Naive thymus-derived CD4-positive, alpha-beta T cell (primary cell): ENCODE measurements at regions of chr14 and their contacts with region 1.

Region 1: GRCh38 chr14:101843665-101844064 is 82.2 kb downstream of the PPP2R5C start:
- DNase-seq: peak in 7 of 9 donors; percentile 54 to 70 (median 59)
- ATAC-seq: peak; percentile 88
- H3K4me3 ChIP-seq: no peak overlapping the region
- H3K4me3 Mint-ChIP-seq: peak overlapping the region in 9 of 10 donors; percentile 5 to 66 (median 56)
- H3K27ac ChIP-seq: peak overlapping the region; percentile 30
- H3K27ac Mint-ChIP-seq: peak overlapping the region; percentile 70 to 90 (median 84)
- H3K4me1 ChIP-seq: peaks cover 56 to 57% of the 10 kb centered on the region in 2 donors
- H3K4me1 Mint-ChIP-seq: peaks cover 67 to 99% (median 90%) of the 10 kb centered on the region in 7 donors
- H3K27me3 ChIP-seq: no peaks in the 10 kb centered on the region
- H3K27me3 Mint-ChIP-seq: no peaks in the 10 kb centered on the region

Region 2: DNA sequence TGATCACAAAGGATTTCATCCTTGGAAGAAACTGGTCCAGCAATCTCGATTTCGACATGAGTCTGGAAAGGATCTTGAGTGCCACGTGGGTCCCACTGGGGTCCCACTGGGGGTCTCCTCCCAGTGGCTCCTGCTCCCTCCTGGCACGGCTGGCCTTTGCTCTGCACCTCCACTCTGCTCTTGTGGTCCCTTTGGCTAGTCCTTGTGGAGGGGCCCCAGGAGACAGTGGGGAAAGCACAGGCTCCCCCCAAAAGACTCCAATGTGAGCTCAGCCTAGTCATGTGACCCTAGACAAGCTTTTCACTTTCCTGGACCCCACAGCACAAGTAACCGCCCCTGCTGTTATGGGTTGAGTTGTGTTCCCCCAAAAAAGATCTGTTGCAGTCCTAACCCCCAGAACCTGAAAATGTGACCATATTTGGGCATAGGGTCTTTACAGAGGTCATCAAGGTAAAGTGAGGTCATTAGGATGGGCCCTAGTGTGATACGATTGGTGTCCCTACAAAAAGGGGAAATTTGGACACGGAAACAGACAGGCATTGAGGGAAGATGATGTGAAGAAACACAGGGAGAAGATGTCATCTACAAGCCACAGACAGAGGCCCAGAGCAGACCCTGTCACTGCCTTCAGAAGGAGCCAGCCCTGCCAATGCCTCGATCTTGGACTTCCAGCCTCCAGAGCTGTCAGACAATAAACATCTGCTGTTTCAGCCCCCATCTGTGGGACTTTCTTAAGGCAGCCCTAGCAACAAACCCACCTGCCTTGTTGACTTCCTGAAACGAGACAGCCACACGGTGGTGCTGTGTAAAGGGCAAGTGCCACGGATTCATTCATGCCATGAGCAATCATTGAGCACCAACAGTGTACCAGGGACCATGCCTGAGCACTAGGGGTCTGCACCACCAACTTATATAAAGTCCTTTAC is 106.0 kb before region 1 on chr14:
- CTCF ChIA-PET with region 1: no interaction called
- POLR2A ChIA-PET with region 1: no interaction called
- intact Hi-C with region 1: loop called in 1 of 2 experiments (anchors 1 kb)
- DNase-seq: peak in 4 of 9 donors; percentile 21 to 27 (median 24)
- ATAC-seq: peak; percentile 65
- H3K4me3 ChIP-seq: no peak overlapping the region
- H3K4me3 Mint-ChIP-seq: no peak overlapping the region
- H3K27ac ChIP-seq: no peak overlapping the region
- H3K27ac Mint-ChIP-seq: peak overlapping the region in 6 of 9 donors; percentile 20 to 76 (median 62)
- H3K4me1 ChIP-seq: peaks cover 1 to 14% of the 10 kb centered on the region in 2 donors
- H3K4me1 Mint-ChIP-seq: peaks cover 0 to 24% (median 12%) of the 10 kb centered on the region in 7 donors
- H3K27me3 ChIP-seq: no peaks in the 10 kb centered on the region
- H3K27me3 Mint-ChIP-seq: no peaks in the 10 kb centered on the region

Region 3: GRCh38 chr14:101767618-101768362 is 75.9 kb before region 1 on chr14:
- CTCF ChIA-PET with region 1: interaction called, 42 read pairs
- POLR2A ChIA-PET with region 1: interaction called, 6 read pairs
- intact Hi-C with region 1: loop called (anchors 1 kb)
- DNase-seq: no peak
- ATAC-seq: no peak
- H3K4me3 ChIP-seq: no peak overlapping the region
- H3K4me3 Mint-ChIP-seq: no peak overlapping the region
- H3K27ac ChIP-seq: no peak overlapping the region
- H3K27ac Mint-ChIP-seq: peak overlapping the region in 3 of 9 donors; percentile 2 to 43 (median 6)
- H3K4me1 ChIP-seq: peaks cover 9 to 11% of the 10 kb centered on the region in 2 donors
- H3K4me1 Mint-ChIP-seq: peaks cover 28 to 52% (median 38%) of the 10 kb centered on the region in 7 donors
- H3K27me3 ChIP-seq: no peaks in the 10 kb centered on the region
- H3K27me3 Mint-ChIP-seq: no peaks in the 10 kb centered on the region

Region 4: GRCh38 chr14:101774006-101774795 is 69.5 kb before region 1 on chr14:
- CTCF ChIA-PET with region 1: interaction called, 42 read pairs
- POLR2A ChIA-PET with region 1: interaction called, 5 read pairs
- intact Hi-C with region 1: loop called (anchors 1 kb)
- DNase-seq: no peak
- ATAC-seq: no peak
- H3K4me3 ChIP-seq: no peak overlapping the region
- H3K4me3 Mint-ChIP-seq: no peak overlapping the region
- H3K27ac ChIP-seq: no peak overlapping the region
- H3K27ac Mint-ChIP-seq: peak overlapping the region in 6 of 9 donors; percentile 14 to 70 (median 28)
- H3K4me1 ChIP-seq: no peaks in the 10 kb centered on the region
- H3K4me1 Mint-ChIP-seq: peaks cover 18 to 41% (median 35%) of the 10 kb centered on the region in 7 donors
- H3K27me3 ChIP-seq: no peaks in the 10 kb centered on the region
- H3K27me3 Mint-ChIP-seq: peaks cover 0 to 8% (median 0%) of the 10 kb centered on the region in 5 donors

Region 5: GRCh38 chr14:101809671-101810514 is 33.8 kb before region 1 on chr14:
- CTCF ChIA-PET with region 1: interaction called, 3 read pairs
- POLR2A ChIA-PET with region 1: interaction called, 11 read pairs
- intact Hi-C with region 1: loop called (anchors 1 to 2 kb)
- DNase-seq: peak; percentile 57 to 97 (median 95)
- ATAC-seq: peak; percentile 94
- H3K4me3 ChIP-seq: peak overlapping the region; percentile 92
- H3K4me3 Mint-ChIP-seq: peak overlapping the region; percentile 94 to 98 (median 96)
- H3K27ac ChIP-seq: peak overlapping the region; percentile 99
- H3K27ac Mint-ChIP-seq: peak overlapping the region; percentile 90 to 100 (median 99)
- H3K4me1 ChIP-seq: peaks cover 36 to 38% of the 10 kb centered on the region in 2 donors
- H3K4me1 Mint-ChIP-seq: peaks cover 27 to 62% (median 55%) of the 10 kb centered on the region in 7 donors
- H3K27me3 ChIP-seq: no peaks in the 10 kb centered on the region
- H3K27me3 Mint-ChIP-seq: no peaks in the 10 kb centered on the region

Region 6: GRCh38 chr14:101854366-101854765 is 10.7 kb after region 1 on chr14:
- CTCF ChIA-PET with region 1: interaction called, 10 read pairs
- POLR2A ChIA-PET with region 1: interaction called, 5 read pairs
- intact Hi-C with region 1: no loop called
- DNase-seq: peak in 6 of 9 donors; percentile 32 to 47 (median 42)
- ATAC-seq: peak; percentile 73
- H3K4me3 ChIP-seq: peak overlapping the region; percentile 22
- H3K4me3 Mint-ChIP-seq: peak overlapping the region; percentile 46 to 85 (median 72)
- H3K27ac ChIP-seq: peak overlapping the region; percentile 36
- H3K27ac Mint-ChIP-seq: peak overlapping the region; percentile 69 to 88 (median 84)
- H3K4me1 ChIP-seq: peaks cover 51 to 71% of the 10 kb centered on the region in 2 donors
- H3K4me1 Mint-ChIP-seq: peaks cover 65 to 96% (median 92%) of the 10 kb centered on the region in 7 donors
- H3K27me3 ChIP-seq: no peaks in the 10 kb centered on the region
- H3K27me3 Mint-ChIP-seq: no peaks in the 10 kb centered on the region

Region 7: DNA sequence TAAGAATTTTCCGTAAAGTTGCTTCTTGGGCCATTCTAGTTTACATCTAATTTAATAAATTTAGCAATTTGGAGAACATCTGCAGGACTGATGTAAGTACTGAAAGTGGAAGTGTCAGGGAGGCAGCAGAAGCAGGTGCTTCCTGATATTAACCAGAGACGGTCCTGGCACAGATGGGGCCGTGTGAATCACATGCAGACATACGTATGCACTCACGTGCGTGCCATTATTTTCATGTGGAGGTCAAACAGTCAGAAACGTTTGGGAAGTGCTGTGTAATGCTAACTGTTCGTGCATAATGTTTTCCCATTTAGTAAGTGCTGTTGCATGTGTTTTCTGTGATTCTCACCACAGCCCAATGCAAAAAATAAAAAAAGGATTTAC is 32.9 kb after region 1 on chr14:
- CTCF ChIA-PET with region 1: interaction called, 3 read pairs
- POLR2A ChIA-PET with region 1: interaction called, 3 read pairs
- intact Hi-C with region 1: loop called (anchors 5 kb)
- DNase-seq: peak in 8 of 9 donors; percentile 42 to 85 (median 68)
- ATAC-seq: peak; percentile 94
- H3K4me3 ChIP-seq: no peak overlapping the region
- H3K4me3 Mint-ChIP-seq: peak overlapping the region; percentile 43 to 87 (median 76)
- H3K27ac ChIP-seq: peak overlapping the region; percentile 72
- H3K27ac Mint-ChIP-seq: peak overlapping the region; percentile 72 to 95 (median 89)
- H3K4me1 ChIP-seq: peaks cover 24 to 52% of the 10 kb centered on the region in 2 donors
- H3K4me1 Mint-ChIP-seq: peaks cover 42 to 96% (median 78%) of the 10 kb centered on the region in 7 donors
- H3K27me3 ChIP-seq: no peaks in the 10 kb centered on the region
- H3K27me3 Mint-ChIP-seq: no peaks in the 10 kb centered on the region

Region 8: GRCh38 chr14:101918065-101918952 is 74.6 kb after region 1 on chr14:
- CTCF ChIA-PET with region 1: no interaction called
- POLR2A ChIA-PET with region 1: no interaction called
- intact Hi-C with region 1: no loop called
- DNase-seq: no peak
- ATAC-seq: no peak
- H3K4me3 ChIP-seq: no peak overlapping the region
- H3K4me3 Mint-ChIP-seq: no peak overlapping the region
- H3K27ac ChIP-seq: no peak overlapping the region
- H3K27ac Mint-ChIP-seq: peak overlapping the region in 2 of 9 donors; percentile 17 to 25
- H3K4me1 ChIP-seq: no peaks in the 10 kb centered on the region
- H3K4me1 Mint-ChIP-seq: peaks cover 0 to 9% (median 3%) of the 10 kb centered on the region in 7 donors
- H3K27me3 ChIP-seq: no peaks in the 10 kb centered on the region
- H3K27me3 Mint-ChIP-seq: no peaks in the 10 kb centered on the region

Region 9: DNA sequence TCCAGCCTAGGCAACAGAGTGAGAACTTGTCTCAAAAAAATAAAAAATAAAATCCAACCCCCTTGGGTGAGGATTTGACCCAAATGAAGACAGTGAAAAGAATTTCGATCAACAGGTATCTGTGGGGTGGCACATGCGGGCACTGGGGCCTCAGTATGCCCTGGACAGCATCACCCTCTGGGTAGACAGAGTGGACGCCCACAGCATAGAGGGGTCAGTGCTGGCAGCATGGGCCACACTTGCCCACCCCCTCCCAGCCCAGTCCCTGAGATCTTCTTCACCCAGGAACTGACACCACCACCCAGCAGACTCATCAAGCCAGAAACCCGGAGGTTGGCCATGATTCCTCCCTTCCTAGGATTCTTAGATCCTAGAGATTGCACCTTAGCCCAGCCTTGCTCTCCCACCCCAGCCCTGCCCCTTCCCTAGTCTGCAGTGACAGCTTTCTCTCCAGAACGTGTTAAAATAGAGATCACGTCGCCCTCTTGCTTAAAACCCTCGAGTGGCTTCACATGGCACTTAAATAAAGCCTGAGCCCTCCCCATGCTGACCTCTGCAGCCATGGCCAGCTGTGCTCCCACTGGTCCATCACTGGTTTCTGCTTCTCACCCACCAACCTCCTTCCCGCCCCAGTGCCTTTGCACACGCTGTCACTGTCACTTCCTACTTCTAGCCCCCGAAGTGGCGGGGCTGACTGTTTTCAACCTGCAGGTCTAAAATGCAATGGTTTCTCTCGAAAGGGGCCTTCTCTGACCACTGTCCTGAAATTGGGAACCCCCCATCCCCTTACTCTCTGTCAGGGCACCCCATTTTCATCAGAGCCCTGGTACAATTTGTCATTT is 94.5 kb after region 1 on chr14:
- CTCF ChIA-PET with region 1: no interaction called
- POLR2A ChIA-PET with region 1: no interaction called
- intact Hi-C with region 1: no loop called
- DNase-seq: no peak
- ATAC-seq: no peak
- H3K4me3 ChIP-seq: no peak overlapping the region
- H3K4me3 Mint-ChIP-seq: no peak overlapping the region
- H3K27ac ChIP-seq: no peak overlapping the region
- H3K27ac Mint-ChIP-seq: no peak overlapping the region
- H3K4me1 ChIP-seq: peaks cover 0 to 4% of the 10 kb centered on the region in 2 donors
- H3K4me1 Mint-ChIP-seq: peaks cover 0 to 6% (median 5%) of the 10 kb centered on the region in 7 donors
- H3K27me3 ChIP-seq: no peaks in the 10 kb centered on the region
- H3K27me3 Mint-ChIP-seq: peaks cover 9 to 29% (median 23%) of the 10 kb centered on the region in 5 donors

Region 10: GRCh38 chr14:101964297-101965144 is 120.9 kb after region 1 on chr14 and contains the start of gene DYNC1H1:
- CTCF ChIA-PET with region 1: no interaction called
- POLR2A ChIA-PET with region 1: no interaction called
- intact Hi-C with region 1: no loop called
- DNase-seq: peak; percentile 82 to 94 (median 90)
- ATAC-seq: peak; percentile 94
- H3K4me3 ChIP-seq: peak within 1 kb of the TSS; percentile 77
- H3K4me3 Mint-ChIP-seq: peak within 1 kb of the TSS; percentile 85 to 92 (median 90)
- H3K27ac ChIP-seq: peak within 1 kb of the TSS; percentile 88
- H3K27ac Mint-ChIP-seq: peak within 1 kb of the TSS; percentile 76 to 93 (median 91)
- H3K4me1 ChIP-seq: peaks cover 20% of the 10 kb centered on the region in 2 donors
- H3K4me1 Mint-ChIP-seq: peaks cover 33 to 55% (median 50%) of the 10 kb centered on the region in 7 donors
- H3K27me3 ChIP-seq: no peaks in the 10 kb centered on the region
- H3K27me3 Mint-ChIP-seq: peaks cover 0 to 2% (median 0%) of the 10 kb centered on the region in 5 donors
- total RNA-seq, gene DYNC1H1: 252 to 310 (median 273) TPM

Region 11: DNA sequence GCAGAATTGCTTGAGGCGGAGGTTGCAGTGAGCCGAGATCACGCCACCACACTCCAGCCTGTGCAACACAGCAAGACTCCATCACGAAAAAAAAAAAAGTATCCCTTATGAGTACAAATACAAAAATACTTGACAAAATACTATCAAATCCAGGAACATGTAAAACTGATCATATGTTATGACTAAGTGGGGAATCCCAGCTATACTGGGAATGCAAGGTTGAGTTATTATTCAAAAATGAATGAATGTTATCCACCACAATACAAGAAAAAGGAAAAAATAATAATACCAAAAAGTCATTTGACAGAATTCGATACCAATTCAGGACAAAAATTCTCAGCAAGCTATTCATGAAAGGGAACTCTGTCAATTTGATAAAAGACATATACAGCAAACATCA is 428.7 kb after region 1 on chr14:
- CTCF ChIA-PET with region 1: no interaction called
- POLR2A ChIA-PET with region 1: no interaction called
- intact Hi-C with region 1: no loop called
- DNase-seq: no peak
- ATAC-seq: no peak
- H3K4me3 ChIP-seq: no peak overlapping the region
- H3K4me3 Mint-ChIP-seq: no peak overlapping the region
- H3K27ac ChIP-seq: no peak overlapping the region
- H3K27ac Mint-ChIP-seq: no peak overlapping the region
- H3K4me1 ChIP-seq: no peaks in the 10 kb centered on the region
- H3K4me1 Mint-ChIP-seq: no peaks in the 10 kb centered on the region
- H3K27me3 ChIP-seq: no peaks in the 10 kb centered on the region
- H3K27me3 Mint-ChIP-seq: peaks cover 0 to 7% (median 0%) of the 10 kb centered on the region in 5 donors